ENCODE measurements at regions of chr1 and their contacts with region 1.

Region 1: GRCh38 chr1:226736908-226737818 is 1.9 kb downstream of the ITPKB start:
- DNase-seq: peak; percentile 72
- ATAC-seq: peak; percentile 56

Region 2: GRCh38 chr1:226568077-226568831 is 168.9 kb before region 1 on chr1:
- intact Hi-C with region 1: no loop called
- DNase-seq: no peak
- ATAC-seq: peak; percentile 70

Region 3: DNA sequence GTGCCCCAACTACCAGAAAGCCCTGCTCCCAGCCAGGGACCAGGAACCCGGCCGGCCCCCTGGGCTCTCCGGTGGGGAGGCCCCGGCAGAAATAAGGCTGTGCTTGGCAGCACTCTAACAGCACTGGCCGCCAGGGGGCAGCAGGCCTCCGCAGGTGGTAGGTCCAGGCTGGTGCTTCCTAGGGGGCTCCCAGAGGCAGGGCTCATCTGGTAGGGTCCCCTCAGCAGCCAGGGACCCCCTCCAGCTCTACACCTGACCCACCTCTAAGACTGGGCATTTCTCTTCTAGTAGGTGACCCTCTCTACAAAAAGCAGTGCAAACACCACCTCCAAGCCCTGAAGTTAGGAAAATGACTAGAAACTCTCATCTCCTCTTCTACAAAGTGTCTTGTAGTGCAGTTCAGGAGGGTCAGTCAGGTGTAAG is 103.0 kb before region 1 on chr1:
- intact Hi-C with region 1: loop called (anchors 5 kb)
- DNase-seq: peak; percentile 92
- ATAC-seq: peak; percentile 79

Region 4: GRCh38 chr1:226662642-226663326 is 74.4 kb before region 1 on chr1:
- intact Hi-C with region 1: loop called (anchors 5 kb)
- DNase-seq: peak; percentile 86
- ATAC-seq: peak; percentile 71

Region 5: GRCh38 chr1:226677027-226678020 is 59.8 kb before region 1 on chr1:
- intact Hi-C with region 1: no loop called
- DNase-seq: peak; percentile 89
- ATAC-seq: peak; percentile 72

Region 6: DNA sequence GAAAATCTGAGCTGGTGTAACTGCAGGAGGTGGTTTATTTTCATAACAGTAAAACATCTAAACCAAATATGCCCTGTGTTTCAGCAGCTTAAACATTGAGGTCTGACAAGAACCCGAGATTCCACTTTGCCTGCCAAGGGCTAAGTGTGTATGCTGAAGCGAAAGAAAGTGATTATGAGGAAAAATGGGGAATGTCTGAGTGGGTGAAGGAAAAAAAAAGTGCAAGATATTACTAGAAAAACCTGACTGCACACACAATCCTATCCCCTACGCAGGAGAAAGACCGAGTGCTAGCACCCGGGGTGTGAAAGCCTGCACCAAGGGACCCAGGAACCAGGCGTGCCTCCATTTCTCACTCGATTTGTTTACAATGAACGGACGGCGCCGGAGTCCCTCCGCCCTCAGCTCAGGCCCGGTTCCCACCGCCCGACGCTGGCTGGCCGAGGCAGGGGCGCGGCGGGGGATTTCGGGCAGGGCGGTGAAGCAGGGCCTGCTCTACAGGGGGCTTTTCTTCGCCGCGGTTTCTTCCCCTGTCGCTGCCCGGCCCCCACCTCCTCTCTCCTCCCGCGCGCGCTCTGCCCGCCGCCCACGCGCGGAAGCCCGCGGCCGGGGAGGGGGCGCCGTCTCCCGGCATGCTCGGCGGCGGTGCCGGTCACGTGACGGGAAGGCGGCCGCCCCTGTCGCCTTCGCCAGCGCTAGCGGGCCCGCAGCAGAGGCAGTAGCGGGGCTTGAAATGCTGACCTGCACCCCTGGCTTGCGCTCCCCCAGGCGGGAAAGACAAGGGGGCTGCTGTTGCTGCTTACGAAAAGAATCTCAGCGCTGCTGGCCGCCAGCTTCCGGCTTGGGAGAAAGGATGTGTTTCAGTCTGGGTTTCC is 34.0 kb before region 1 on chr1:
- intact Hi-C with region 1: loop called (anchors 2 kb)
- DNase-seq: peak; percentile 91
- ATAC-seq: peak; percentile 93

Region 7: GRCh38 chr1:226784081-226785049 is 47.2 kb after region 1 on chr1:
- intact Hi-C with region 1: loop called (anchors 5 kb)
- DNase-seq: no peak
- ATAC-seq: no peak